ENCODE measurements at regions of chr10 and their contacts with region 1.

Region 1: GRCh38 chr10:5446390-5446926 is 34.1 kb downstream of the NET1 start:
- DNase-seq: peak; percentile 97

Region 2: GRCh38 chr10:5265139-5265538 is 181.3 kb before region 1 on chr10:
- intact Hi-C with region 1: no loop called
- DNase-seq: no peak

Region 3: DNA sequence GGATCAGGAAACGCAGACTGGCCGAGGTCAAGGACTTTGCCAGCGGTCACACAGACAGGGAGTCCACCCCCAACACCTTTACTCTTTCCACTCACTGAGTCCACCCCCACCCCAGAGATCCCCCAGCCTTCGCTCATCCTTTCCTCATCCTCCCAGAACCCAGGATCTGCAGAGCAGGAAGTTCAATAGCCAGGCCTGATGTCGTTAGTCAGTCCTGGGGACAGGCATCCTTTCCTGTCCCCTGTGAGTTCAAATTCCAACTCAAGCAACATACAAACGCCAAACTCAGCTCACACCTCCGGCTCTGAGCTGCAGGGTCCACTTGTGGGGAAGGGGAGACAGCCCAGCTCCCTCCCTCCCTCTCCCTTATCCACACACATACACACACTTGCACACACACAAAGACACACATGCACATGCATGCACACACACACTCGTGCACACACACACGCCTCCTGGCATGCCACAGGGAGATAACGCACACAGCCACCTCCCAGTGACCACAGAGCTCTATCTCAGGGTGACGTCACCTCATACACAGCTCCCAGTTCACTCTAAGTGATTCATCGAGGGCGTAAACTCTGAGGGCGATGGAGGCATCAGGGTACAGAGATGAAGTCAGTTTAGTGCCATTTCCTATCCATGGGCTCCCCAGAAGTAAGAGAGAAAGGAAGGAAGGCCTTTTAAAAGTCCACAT is 102.2 kb after region 1 on chr10:
- intact Hi-C with region 1: loop called in 1 of 2 experiments (anchors 10 kb)
- DNase-seq: peak; percentile 91

Region 4: DNA sequence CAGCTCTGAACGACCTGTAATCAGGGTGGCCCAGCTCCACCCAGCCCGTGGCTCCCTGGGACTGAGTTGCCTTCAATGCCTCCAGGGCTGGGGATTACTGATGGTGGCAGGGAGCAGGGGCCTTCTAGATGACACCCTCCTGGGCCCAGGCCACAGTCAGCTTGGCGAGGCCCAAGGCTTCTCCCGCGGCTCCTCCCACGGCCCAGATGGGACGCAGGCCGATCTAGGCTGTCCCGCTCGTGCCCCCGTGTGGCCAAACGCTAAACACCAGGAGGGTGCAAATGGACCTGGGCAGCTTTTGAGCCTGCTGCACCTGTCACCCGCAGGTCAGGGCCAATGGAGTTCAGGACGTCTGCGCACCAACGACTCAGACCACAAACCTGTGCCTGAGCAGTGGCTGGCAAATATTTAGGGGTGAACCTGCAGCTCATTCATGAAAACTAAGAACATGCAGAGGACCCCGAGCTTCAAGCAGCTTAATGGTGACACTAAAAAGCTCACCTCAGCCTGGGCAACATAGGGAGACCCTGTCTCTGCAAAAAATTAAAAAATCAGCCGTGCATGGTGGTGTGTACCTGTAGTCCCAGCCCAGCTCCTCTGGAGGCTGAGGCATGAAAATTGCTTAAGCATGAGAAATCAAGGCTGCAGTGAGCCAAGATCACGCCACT is 176.8 kb after region 1 on chr10:
- intact Hi-C with region 1: loop called in 1 of 2 experiments (anchors 5 kb)
- DNase-seq: peak; percentile 96

Region 5: GRCh38 chr10:5684971-5685763 is 238.7 kb after region 1 on chr10:
- intact Hi-C with region 1: loop called in 1 of 2 experiments (anchors 5 kb)
- DNase-seq: peak; percentile 91

Region 6: GRCh38 chr10:6563075-6563474 is 1116.6 kb after region 1 on chr10:
- intact Hi-C with region 1: no loop called
- DNase-seq: no peak